T-cell (primary cell): ENCODE measurements at regions of chr1 and their contacts with region 1.

Region 1: DNA sequence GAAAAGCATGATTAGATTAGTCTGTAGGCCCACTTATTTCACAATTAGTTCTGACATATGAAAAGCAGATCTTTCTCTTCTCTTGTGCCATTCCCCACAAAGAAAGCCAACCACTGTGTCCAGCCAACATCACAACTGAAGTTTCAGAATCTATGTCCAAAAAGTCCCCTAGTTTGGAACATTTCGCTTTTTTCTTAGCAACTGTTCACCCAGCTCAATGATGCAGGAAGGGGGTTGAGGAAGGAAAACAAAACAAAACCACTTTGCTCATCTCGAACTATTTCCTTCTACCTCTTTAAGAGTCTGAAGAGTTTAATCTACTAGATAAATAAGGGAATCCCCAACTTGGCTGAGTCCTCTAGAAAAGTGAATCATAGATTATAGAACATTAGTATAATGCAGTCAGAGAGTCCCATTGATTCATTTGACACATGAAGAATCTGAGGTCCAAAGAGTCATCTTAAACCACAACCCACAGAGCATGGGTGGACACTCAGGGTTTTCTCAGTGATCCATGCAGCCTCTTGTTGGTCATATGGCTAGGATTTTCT is 159.3 kb upstream of the SGIP1 start:
- DNase-seq: peak in 2 of 35 experiments; percentile 20 to 68
- ATAC-seq: peak; percentile 75 to 82 (median 76)
- H3K4me3 ChIP-seq: no peak overlapping the region
- H3K4me3 Mint-ChIP-seq: peak overlapping the region; percentile 35 to 50 (median 40)
- H3K27ac ChIP-seq: peak overlapping the region; percentile 84
- H3K27ac Mint-ChIP-seq: peak overlapping the region; percentile 88 to 89
- H3K4me1 ChIP-seq: peaks cover 38 to 46% of the 10 kb centered on the region in 2 experiments
- H3K4me1 Mint-ChIP-seq: peaks cover 51 to 81% (median 65%) of the 10 kb centered on the region in 3 donors
- H3K27me3 ChIP-seq: no peaks in the 10 kb centered on the region
- H3K27me3 Mint-ChIP-seq: no peaks in the 10 kb centered on the region

Region 2: DNA sequence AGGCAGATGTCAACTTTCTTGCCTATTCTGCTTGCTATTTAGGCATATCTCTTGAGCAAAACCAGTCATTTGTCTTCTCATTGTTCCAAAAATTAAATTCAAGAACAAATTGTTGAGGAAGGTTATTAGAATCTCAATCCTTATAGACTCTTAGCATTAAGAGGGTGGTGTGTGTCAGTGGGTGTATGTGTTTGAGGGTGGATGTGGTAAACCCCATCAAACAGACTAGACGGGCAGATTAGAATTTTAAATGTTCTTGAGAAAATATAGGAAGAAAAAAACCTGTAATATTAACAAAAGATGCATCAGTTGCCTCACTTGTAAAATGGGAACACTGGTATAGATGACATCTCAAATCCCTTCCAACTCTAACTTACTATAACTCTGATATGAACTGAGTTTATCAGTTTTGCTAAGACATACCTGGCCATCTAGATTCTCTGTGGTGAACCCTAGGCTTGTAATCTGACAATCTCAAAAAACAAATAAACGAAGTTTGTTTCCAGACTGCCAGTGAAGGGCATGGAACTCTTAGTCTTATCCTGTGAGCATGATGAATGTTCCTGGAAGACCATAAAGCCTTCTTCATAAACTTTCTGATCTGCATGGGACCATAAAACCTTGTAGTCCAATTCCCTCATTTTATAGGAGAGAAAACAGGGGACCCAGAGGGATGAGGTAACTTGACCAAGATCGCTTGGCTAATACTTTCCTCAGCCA is 17.0 kb before region 1 on chr1:
- CTCF ChIA-PET with region 1: interaction called in 1 of 2 experiments, 4 read pairs
- POLR2A ChIA-PET with region 1: interaction called in 1 of 2 experiments, 14 read pairs
- DNase-seq: peak in 4 of 35 experiments; percentile 24 to 67 (median 27)
- ATAC-seq: peak; percentile 82 to 92 (median 88)
- H3K4me3 ChIP-seq: no peak overlapping the region
- H3K4me3 Mint-ChIP-seq: peak overlapping the region; percentile 8 to 41 (median 36)
- H3K27ac ChIP-seq: peak overlapping the region; percentile 43
- H3K27ac Mint-ChIP-seq: peak overlapping the region; percentile 69
- H3K4me1 ChIP-seq: peaks cover 35 to 43% of the 10 kb centered on the region in 2 experiments
- H3K4me1 Mint-ChIP-seq: peaks cover 87 to 92% (median 91%) of the 10 kb centered on the region in 3 donors
- H3K27me3 ChIP-seq: no peaks in the 10 kb centered on the region
- H3K27me3 Mint-ChIP-seq: no peaks in the 10 kb centered on the region